ENCODE measurements at regions of chr3 and their contacts with region 1.

Region 1: GRCh38 chr3:188439080-188439479 is 285.1 kb downstream of the LPP start:
- DNase-seq: peak; percentile 63
- ATAC-seq: peak; percentile 87
- H3K4me3 Mint-ChIP-seq: peak overlapping the region; percentile 34
- H3K27ac Mint-ChIP-seq: peak overlapping the region; percentile 78
- H3K4me1 Mint-ChIP-seq: peaks cover 52% of the 10 kb centered on the region
- H3K27me3 Mint-ChIP-seq: no peaks in the 10 kb centered on the region
- CTCF ChIP-seq: no peak

Region 2: DNA sequence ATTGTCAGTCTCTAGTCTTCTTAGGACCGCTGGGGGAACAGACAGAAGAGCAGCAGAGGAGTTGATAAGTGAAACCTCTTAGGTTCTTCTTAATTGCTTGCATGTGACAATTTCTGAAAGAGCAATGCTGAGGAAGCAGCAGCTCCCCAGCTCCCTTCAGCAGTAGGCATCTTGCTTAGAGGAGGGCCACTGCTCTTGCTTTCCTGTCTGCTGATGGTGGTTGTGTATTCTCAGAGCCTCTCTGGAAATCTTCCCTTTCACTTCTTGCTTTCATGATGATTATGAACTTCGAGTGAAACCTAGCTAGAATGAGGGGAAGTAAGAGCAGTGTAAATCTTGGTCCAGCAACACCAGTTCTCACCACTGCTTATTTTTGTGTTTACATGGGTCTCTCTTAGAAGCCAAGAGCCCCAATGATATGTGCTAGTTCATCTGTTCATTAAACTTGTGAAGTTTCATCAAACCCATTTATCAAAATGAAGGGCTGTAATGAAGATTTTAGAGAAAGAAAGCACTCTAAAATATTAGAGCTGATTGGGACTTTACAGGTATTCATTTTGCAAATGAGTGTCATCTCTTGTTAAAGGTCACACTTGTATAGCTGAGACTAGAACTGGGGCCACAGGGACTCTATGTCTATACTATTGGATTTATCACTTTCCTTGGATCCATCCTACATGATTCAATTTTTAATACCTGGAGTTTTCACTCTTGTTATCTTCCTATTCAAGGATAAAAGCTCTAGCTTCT is 38.4 kb before region 1 on chr3:
- CTCF ChIA-PET with region 1: interaction called, 3 read pairs
- POLR2A ChIA-PET with region 1: interaction called, 4 read pairs
- intact Hi-C with region 1: loop called (anchors 5 kb)
- DNase-seq: peak; percentile 51
- ATAC-seq: peak; percentile 83
- H3K4me3 Mint-ChIP-seq: no peak overlapping the region
- H3K27ac Mint-ChIP-seq: peak overlapping the region; percentile 71
- H3K4me1 Mint-ChIP-seq: peaks cover 67% of the 10 kb centered on the region
- H3K27me3 Mint-ChIP-seq: no peaks in the 10 kb centered on the region
- CTCF ChIP-seq: no peak

Region 3: GRCh38 chr3:188584162-188584529 is 145.1 kb after region 1 on chr3:
- CTCF ChIA-PET with region 1: no interaction called
- POLR2A ChIA-PET with region 1: no interaction called
- intact Hi-C with region 1: loop called (anchors 10 kb)
- DNase-seq: no peak
- ATAC-seq: peak; percentile 69
- H3K4me3 Mint-ChIP-seq: no peak overlapping the region
- H3K27ac Mint-ChIP-seq: no peak overlapping the region
- H3K4me1 Mint-ChIP-seq: peaks cover 25% of the 10 kb centered on the region
- H3K27me3 Mint-ChIP-seq: no peaks in the 10 kb centered on the region
- CTCF ChIP-seq: no peak